Heart left ventricle (tissue), 16 donors: ENCODE measurements at regions of chr16 and their contacts with region 1.

Region 1: DNA sequence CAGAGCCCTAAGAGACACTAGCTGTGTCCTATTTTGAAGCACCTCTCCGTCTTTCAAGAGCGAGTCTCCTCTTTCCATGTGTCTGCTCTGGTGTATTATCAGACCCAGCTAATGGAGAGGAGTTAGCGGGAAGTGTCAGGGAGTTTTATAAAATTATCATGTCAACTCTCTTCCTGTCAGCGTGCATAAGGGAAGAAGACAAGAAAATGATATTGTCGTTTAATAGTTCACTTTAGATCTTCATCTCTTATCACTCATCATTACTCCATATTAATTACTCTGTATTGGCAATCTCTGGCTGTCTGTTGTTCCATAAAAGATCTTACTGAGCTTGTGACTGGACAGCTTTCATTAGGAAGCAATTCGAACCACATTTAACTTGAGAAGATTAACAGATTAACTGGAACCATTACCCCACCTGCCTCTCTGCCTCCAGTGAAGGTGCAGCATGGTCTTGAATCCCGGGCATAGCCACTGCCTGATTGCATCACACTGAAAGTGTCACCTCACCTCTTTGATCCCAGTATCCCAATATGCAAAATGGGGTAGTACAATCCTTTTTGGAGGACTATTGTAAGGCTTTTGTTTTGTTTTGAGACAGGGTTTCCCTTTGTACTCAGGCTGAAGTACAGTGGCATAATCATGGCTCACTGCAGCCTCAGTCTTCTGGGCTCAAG is 121.1 kb downstream of the TMEM114 start:
- DNase-seq: no peak
- ATAC-seq: no peak
- H3K4me3 ChIP-seq: no peak overlapping the region
- H3K27ac ChIP-seq: no peak overlapping the region
- H3K4me1 ChIP-seq: no peaks in the 10 kb centered on the region
- H3K27me3 ChIP-seq: peaks cover 0 to 9% (median 0%) of the 10 kb centered on the region in 9 donors
- CTCF ChIP-seq: no peak
- POLR2A ChIP-seq: no peak

Region 2: DNA sequence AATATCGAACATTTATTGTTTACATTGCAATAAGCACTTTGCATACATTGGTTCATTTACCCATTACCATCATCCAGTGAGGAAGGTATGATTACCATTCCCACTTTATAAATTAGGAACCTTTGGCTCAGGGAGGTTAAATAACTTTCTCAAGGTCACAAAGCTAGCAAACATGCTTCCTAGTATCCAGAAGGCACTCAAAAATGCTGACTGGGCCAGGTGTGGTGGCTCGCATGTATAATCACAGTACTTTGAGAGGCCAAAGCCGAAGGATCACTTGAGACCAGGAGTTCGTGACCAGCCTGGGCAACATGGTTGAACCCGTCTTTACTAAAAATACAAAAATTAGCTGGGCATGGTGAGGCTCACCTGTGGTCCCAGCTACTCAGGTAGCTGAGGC is 138.5 kb before region 1 on chr16:
- intact Hi-C with region 1: no loop called
- DNase-seq: no peak
- ATAC-seq: no peak
- H3K4me3 ChIP-seq: no peak overlapping the region
- H3K27ac ChIP-seq: no peak overlapping the region
- H3K4me1 ChIP-seq: no peaks in the 10 kb centered on the region
- H3K27me3 ChIP-seq: no peaks in the 10 kb centered on the region
- CTCF ChIP-seq: no peak
- POLR2A ChIP-seq: no peak

Region 3: DNA sequence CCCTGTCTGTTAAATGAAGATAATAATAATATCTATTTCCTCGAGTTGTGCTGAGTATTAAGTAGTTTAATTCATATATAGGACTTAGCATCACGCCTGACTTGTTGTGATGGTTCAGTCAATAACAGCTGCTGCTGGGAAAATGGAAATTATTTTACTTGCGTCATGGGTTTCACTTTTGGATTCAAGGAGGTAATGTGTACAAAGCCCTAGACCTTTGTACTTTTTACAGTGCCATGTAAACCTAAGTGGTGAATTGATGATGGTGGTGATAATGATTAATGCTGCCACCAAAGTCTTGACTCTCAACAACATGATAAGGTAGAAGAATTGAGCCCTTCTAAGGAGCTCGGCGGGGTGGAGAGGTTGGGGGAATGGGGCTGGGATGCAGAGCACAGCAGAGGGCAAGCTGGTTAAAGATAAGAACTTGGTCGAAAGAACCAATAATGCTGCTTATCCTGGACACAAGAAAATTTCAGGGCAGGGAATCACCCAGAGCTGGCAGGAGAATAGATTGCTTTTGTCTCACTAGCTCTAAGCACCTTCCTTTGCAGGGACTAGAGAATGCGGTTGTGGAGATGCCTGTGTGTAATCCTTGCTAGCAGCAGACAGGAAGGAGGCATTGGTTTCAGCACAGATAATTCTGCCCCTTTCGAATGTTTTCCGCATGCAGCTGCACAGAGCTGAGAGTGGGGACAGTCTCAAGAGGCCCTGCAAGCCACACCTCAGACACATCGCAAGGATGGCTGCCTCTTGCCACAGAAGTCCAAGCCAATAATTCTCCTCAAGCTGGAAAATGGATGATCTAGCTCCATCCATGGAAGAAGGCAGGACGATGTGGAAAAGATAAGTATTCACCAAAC is 66.0 kb before region 1 on chr16:
- intact Hi-C with region 1: loop called in 1 of 10 experiments (anchors 10 kb)
- DNase-seq: no peak
- ATAC-seq: peak in 1 of 4 donors; percentile 13
- H3K4me3 ChIP-seq: no peak overlapping the region
- H3K27ac ChIP-seq: no peak overlapping the region
- H3K4me1 ChIP-seq: no peaks in the 10 kb centered on the region
- H3K27me3 ChIP-seq: no peaks in the 10 kb centered on the region
- CTCF ChIP-seq: no peak
- POLR2A ChIP-seq: no peak